ENCODE measurements at regions of chr5 and their contacts with region 1.

Region 1: DNA sequence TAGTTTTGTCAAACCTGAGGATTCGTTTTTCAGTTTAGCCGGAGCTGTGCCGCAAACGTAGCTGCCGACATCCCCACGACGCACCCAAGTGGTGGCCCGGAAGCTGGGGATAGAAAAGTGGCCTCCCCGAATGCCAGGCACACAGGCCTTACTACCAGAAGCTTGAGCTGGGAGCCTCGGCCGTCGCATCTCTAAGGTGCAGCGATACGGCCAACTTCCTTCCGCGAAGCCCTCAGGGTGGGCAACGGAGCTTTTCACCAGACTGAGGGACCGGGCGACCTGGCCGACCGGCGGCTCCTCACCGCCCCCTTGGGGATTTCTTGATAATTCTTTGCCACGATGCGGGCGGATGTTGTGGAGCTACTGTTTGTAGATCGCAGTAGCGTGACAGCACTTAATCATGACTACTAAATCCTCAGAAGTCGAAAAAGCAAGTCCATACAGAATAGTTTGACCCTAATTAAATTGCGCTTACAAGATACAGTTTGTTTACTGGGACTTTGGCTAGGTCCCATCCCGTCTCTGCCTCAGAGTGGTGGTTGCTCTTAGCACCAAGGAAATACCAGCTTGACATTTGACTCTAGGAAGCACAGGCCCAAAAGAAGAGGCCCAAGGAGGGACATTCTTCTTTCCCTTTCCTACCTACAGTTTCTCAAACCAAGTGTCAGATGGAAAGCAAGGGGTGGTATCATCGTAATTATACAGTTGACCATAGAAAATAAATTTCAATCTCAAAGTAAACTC is 613 bp upstream of the TMEM267 start:
- DNase-seq: peak; percentile 94
- ATAC-seq: peak; percentile 78
- H3K4me3 Mint-ChIP-seq: peak overlapping the region; percentile 98
- H3K27ac Mint-ChIP-seq: peak overlapping the region; percentile 100
- H3K4me1 Mint-ChIP-seq: peaks cover 45% of the 10 kb centered on the region
- H3K27me3 Mint-ChIP-seq: no peaks in the 10 kb centered on the region

Region 2: DNA sequence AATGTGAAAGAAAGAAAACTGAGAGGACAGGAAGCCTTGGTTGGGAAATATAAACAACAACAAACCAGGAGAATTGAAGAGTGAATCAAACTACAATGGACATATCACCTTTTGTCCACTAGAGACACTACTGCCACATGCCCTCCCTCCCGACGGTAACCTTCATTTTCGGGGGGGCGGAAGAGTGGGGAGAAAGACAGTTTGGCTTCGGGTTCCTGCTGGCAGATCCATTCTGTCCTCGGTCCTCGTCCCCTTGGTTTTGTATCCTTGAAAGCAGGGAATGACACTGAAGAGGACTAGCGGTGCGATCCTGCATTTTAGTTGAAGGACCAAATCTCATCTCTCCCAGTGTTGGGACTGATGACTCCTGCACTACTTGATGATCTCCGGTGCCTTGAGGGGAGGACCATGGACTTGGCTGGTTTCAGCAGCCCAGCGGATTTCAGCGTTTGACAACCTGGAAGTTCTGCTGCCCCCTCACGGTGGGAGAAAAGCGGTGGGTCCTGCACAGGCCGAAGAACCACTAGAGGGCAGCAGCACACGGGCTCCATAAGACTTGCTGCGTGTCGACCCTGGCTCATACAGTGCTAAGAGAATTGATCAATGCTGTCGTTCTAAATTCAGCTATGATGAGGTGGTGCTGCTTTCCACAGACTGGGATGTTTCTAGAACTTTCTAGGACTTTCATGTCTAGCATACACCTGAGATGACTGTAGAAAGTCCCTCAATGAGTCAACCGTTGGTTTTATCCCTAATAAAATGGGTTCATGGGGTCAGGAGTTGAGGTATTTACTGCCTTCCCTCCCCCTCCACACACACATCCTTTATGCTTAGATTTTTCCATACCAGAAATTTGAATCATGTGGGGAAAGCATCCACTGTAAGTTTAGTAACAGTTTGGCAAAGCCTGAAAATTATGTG is 378.6 kb before region 1 on chr5:
- CTCF ChIA-PET with region 1: interaction called, 11 read pairs
- DNase-seq: peak; percentile 93
- ATAC-seq: peak; percentile 90
- H3K4me3 Mint-ChIP-seq: peak overlapping the region; percentile 81
- H3K27ac Mint-ChIP-seq: peak overlapping the region; percentile 84
- H3K4me1 Mint-ChIP-seq: peaks cover 42% of the 10 kb centered on the region
- H3K27me3 Mint-ChIP-seq: no peaks in the 10 kb centered on the region

Region 3: GRCh38 chr5:43313035-43313853 is 171.0 kb before region 1 on chr5 and contains the start of gene HMGCS1:
- CTCF ChIA-PET with region 1: interaction called, 10 read pairs
- DNase-seq: peak; percentile 100
- ATAC-seq: peak; percentile 92
- H3K4me3 Mint-ChIP-seq: peak within 1 kb of the TSS; percentile 99
- H3K27ac Mint-ChIP-seq: peak within 1 kb of the TSS; percentile 96
- H3K4me1 Mint-ChIP-seq: peaks cover 62% of the 10 kb centered on the region
- H3K27me3 Mint-ChIP-seq: no peaks in the 10 kb centered on the region
- total RNA-seq, gene HMGCS1: 91.4 to 121 TPM

Region 4: GRCh38 chr5:43418561-43418960 is 65.7 kb before region 1 on chr5:
- CTCF ChIA-PET with region 1: no interaction called
- DNase-seq: no peak
- ATAC-seq: no peak
- H3K4me3 Mint-ChIP-seq: no peak overlapping the region
- H3K27ac Mint-ChIP-seq: no peak overlapping the region
- H3K4me1 Mint-ChIP-seq: no peaks in the 10 kb centered on the region
- H3K27me3 Mint-ChIP-seq: peaks cover 3% of the 10 kb centered on the region

Region 5: GRCh38 chr5:43514816-43515677 is 30.8 kb after region 1 on chr5 and contains the start of gene C5orf34:
- CTCF ChIA-PET with region 1: interaction called, 25 read pairs
- DNase-seq: peak; percentile 96
- ATAC-seq: peak; percentile 99
- H3K4me3 Mint-ChIP-seq: peak within 1 kb of the TSS; percentile 92
- H3K27ac Mint-ChIP-seq: peak within 1 kb of the TSS; percentile 98
- H3K4me1 Mint-ChIP-seq: peaks cover 31% of the 10 kb centered on the region
- H3K27me3 Mint-ChIP-seq: no peaks in the 10 kb centered on the region
- total RNA-seq, gene C5orf34: 7.0 to 9.8 TPM